ENCODE measurements at regions of chr15 and their contacts with region 1.

Region 1: DNA sequence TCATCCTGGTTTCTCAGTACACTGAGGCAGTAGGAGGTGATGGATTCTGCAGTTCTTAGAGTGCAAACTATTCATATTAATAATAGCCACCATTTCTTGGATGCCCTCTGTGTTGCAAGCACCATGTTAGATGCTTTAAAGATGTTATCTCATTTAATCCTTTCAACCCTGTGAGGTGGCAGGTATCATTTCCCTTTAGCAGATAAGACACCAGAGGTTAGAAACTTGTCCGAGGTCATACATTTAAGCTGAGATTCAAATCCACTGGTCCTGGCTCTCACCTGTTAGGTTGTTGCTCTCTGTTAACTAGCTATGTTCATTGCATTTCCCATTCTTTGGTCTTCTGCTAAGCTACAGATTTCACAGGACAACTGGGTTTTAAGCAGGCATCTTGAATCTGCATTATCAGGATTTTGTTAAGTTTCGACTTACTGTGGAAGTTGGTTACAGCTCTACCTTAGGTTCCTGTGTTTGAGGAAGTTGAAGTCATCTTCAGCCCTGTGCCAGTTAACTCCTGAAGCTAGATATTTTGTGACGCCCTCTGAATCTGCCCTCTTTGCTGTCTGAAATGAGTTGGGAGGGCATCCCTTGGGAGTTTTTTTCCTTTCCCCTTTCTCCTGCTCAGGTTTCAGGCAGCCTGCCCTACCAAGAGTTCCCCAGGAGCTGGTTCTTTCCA is 6.4 kb downstream of the PDE8A start:
- DNase-seq: no peak
- H3K4me3 ChIP-seq: no peak overlapping the region
- H3K27ac ChIP-seq: no peak overlapping the region
- H3K4me1 ChIP-seq: peaks cover 19% of the 10 kb centered on the region
- H3K27me3 ChIP-seq: no peaks in the 10 kb centered on the region
- CTCF ChIP-seq: no peak

Region 2: GRCh38 chr15:84773716-84774115 is 214.4 kb before region 1 on chr15:
- CTCF ChIA-PET with region 1: no interaction called
- dilution Hi-C with region 1: no loop called
- in situ Hi-C with region 1: no loop called
- intact Hi-C with region 1: no loop called
- DNase-seq: no peak
- H3K4me3 ChIP-seq: no peak overlapping the region
- H3K27ac ChIP-seq: no peak overlapping the region
- H3K4me1 ChIP-seq: no peaks in the 10 kb centered on the region
- H3K27me3 ChIP-seq: no peaks in the 10 kb centered on the region
- CTCF ChIP-seq: no peak

Region 3: GRCh38 chr15:84924074-84924731 is 63.9 kb before region 1 on chr15:
- CTCF ChIA-PET with region 1: no interaction called
- dilution Hi-C with region 1: loop called (anchors 5 kb)
- in situ Hi-C with region 1: no loop called
- intact Hi-C with region 1: no loop called
- DNase-seq: no peak
- H3K4me3 ChIP-seq: no peak overlapping the region
- H3K27ac ChIP-seq: no peak overlapping the region
- H3K4me1 ChIP-seq: peaks cover 7% of the 10 kb centered on the region
- H3K27me3 ChIP-seq: no peaks in the 10 kb centered on the region
- CTCF ChIP-seq: no peak

Region 4: DNA sequence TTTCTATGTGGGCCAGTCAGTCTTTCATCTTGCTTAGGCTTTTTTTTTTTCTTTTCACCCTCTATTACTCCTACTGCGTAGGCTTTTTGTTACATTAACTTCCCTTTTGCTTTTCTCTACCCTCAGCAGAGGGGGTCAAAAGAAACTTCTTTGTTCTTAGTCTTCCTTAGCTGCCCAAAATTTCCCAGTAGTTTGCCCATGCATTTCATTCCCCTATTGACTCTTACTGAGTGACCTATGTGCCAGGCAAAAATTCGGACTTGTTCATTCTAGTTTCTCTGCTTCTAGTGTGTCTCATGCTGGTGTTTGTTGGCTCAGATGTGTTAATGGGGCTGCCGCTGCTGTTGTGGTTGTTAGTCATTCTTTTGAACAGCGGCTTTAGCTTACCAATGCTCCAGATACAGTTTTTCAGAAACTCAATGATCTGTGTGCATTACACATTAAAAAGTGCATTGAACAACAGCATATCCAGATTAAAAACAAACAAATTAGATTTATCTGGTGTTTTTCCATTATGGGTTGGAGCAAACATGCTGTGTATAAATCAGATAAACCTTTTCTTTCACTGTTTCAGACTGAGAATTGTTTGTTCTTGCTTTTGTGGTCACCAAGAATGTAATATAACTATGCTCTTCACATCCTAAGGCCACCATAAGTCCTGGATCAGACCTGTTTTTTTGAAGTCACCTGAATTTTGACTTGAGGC is 36.6 kb after region 1 on chr15:
- CTCF ChIA-PET with region 1: no interaction called
- dilution Hi-C with region 1: loop called (anchors 5 kb)
- in situ Hi-C with region 1: no loop called
- intact Hi-C with region 1: no loop called
- DNase-seq: peak; percentile 91
- H3K4me3 ChIP-seq: no peak overlapping the region
- H3K27ac ChIP-seq: no peak overlapping the region
- H3K4me1 ChIP-seq: peaks cover 16% of the 10 kb centered on the region
- H3K27me3 ChIP-seq: no peaks in the 10 kb centered on the region
- CTCF ChIP-seq: no peak

Region 5: GRCh38 chr15:85063126-85064079 is 75.3 kb after region 1 on chr15:
- CTCF ChIA-PET with region 1: no interaction called
- dilution Hi-C with region 1: no loop called
- in situ Hi-C with region 1: no loop called
- intact Hi-C with region 1: no loop called
- DNase-seq: no peak
- H3K4me3 ChIP-seq: no peak overlapping the region
- H3K27ac ChIP-seq: no peak overlapping the region
- H3K4me1 ChIP-seq: no peaks in the 10 kb centered on the region
- H3K27me3 ChIP-seq: no peaks in the 10 kb centered on the region
- CTCF ChIP-seq: no peak

Measured in mammary epithelial cell (primary cell).